Tibial artery (tissue), 4 donors: ENCODE measurements at regions of chr15 and their contacts with region 1.

Region 1: DNA sequence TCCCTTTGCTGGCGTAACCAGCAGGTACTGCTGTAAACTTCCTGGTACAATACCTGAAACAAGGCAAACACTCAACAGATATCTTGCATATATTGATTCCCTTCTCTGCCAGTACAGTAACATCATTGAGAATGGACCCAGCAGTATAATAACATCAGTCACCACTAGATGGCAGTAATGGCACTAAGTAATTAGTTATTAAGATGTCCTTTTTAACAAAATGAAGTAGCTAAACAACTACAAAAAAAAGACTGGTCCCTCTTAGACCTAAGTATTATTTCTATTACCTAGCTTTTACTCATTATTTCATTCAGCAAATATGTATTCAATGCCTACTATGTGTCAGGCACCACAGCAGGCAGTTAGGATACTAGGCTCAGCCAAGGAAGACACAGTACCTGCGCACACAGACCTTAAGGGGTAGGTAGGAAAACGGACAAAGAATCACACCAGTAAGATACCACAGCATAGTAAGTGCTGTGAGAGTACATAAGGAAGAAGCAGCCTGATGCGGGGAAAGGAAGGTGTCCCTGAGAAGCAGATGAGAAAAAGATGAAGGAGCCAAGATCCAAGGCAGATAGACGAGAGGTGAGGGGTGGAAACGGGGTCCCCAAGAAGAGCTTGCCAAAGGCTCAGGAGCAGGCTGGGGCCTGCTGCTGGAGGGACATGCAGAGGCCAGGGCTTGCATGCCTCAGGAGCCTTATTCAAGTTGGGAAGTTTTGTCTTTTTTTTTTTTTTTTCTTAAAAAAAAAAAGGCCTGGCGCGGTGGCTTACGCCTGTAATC is 102.8 kb upstream of the CHD2 start:
- DNase-seq: no peak
- H3K4me3 ChIP-seq: no peak overlapping the region
- H3K27ac ChIP-seq: peak overlapping the region; percentile 52 to 63
- H3K4me1 ChIP-seq: peaks cover 3 to 25% (median 16%) of the 10 kb centered on the region in 4 donors
- H3K27me3 ChIP-seq: no peaks in the 10 kb centered on the region
- CTCF ChIP-seq: peak; percentile 68 to 81

Region 2: DNA sequence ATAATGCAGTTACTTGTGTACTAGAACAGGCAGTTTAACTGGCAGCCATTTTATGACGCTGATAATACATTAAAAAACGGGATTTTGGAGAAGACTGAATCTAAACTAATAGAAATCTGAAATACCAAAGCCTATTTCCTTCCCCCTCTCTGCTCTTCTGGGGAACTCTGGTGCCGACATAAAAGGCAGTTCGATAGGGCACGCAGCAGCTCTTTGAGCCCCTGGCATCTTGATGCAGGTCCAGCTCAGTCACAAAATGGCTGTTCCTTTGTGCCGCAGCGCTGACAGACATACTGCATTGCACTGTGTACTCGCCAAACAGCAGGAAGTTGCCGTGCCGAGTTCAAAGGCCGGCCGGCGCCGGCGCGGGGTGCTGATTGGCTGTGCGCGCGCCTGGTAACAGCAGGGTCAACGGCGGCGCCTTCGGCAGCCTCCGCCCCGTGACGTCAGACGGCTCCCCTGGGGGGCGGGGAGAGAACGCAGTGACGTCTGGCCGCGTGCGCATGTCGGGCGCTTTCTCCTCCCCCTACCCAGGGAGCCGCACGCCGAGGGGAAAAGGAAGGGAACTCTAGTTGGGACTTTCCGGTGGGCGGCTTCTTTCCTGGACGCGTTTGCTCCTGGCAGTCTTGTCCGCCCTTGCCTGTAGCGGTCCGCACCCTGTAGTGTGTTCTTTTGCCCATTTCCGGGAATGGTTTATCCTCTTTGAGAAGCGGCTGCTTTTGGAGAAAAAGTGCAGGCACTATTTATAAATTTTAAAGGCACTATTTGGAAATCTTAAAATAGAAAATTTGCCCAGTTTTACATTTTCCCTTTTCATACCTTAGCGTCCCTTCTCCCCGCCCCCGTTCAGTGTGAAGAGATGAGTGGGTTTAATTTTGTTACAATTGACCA is 106.8 kb after region 1 on chr15:
- intact Hi-C with region 1: no loop called
- DNase-seq: peak; percentile 97 to 100
- H3K4me3 ChIP-seq: peak overlapping the region; percentile 60 to 65
- H3K27ac ChIP-seq: peak overlapping the region; percentile 92 to 95
- H3K4me1 ChIP-seq: peaks cover 0 to 68% (median 30%) of the 10 kb centered on the region in 4 donors
- H3K27me3 ChIP-seq: no peaks in the 10 kb centered on the region
- CTCF ChIP-seq: peak in 1 of 2 experiments; percentile 25

Region 3: DNA sequence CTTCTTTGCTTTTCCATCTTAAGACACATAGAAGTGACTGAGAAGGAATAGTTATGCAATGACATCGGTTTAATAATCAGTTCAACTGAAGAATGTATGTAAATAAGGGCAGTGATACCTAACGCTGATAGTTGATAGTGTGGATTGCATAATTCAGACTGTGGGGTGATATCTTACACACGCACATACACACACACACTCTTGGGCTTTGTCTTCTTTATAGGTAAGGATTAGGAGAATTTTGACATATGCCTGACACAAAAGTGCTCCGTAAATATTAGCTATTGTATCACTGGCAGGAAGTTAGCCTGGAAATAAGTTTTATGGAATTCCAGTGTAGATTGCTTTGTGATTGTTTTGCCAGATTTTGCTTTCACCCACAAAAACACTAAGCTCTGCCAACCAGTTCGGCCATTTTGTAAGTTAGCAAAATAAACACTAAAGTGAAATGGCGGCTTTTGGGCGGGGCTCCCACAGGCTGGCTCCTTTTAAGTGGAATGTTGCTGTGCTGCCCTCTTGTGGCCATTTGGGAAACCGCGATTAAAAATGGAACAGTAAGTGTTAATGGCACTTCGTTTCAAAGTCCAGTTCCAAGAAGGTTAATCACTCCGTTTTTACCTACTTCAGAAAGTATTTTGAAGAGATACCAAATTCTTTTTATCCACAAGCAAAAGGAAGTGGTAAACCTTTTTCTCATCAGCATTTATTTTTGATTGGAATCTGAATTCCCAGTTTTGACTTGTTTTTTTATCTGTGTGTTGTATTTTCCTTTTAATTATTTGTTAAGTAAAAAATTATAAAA is 120.4 kb after region 1 on chr15:
- intact Hi-C with region 1: loop called (anchors 5 kb)
- DNase-seq: peak; percentile 96 to 98
- H3K4me3 ChIP-seq: peak overlapping the region; percentile 17 to 18
- H3K27ac ChIP-seq: peak overlapping the region; percentile 92 to 95
- H3K4me1 ChIP-seq: peaks cover 6 to 98% (median 71%) of the 10 kb centered on the region in 4 donors
- H3K27me3 ChIP-seq: no peaks in the 10 kb centered on the region
- CTCF ChIP-seq: peak; percentile 88 to 97

Region 4: DNA sequence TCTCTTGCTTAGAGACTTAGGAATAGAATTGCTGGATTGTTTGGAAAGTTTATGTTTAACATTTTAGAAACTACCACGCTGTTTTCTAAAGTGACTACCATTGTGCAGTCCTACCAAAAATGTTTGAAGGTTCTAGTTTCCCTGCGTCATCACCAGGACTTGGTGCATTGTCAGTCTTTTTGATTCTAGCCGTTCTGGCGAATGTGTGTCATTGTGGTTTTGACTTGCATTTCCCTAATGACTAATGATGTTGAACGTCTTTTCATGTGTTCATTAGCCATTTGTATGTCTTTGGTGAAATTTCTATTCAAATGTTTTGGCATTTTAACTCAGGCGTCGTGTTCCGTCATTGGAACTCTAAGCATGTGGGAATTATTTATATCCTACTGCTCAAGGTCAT is 160.7 kb after region 1 on chr15:
- intact Hi-C with region 1: no loop called
- DNase-seq: no peak
- H3K4me3 ChIP-seq: no peak overlapping the region
- H3K27ac ChIP-seq: peak overlapping the region in 1 of 2 donors; percentile 28
- H3K4me1 ChIP-seq: peaks cover 0 to 28% (median 2%) of the 10 kb centered on the region in 4 donors
- H3K27me3 ChIP-seq: no peaks in the 10 kb centered on the region
- CTCF ChIP-seq: no peak

Region 5: GRCh38 chr15:92989470-92989869 is 192.1 kb after region 1 on chr15:
- intact Hi-C with region 1: loop called (anchors 10 kb)
- DNase-seq: no peak
- H3K4me3 ChIP-seq: no peak overlapping the region
- H3K27ac ChIP-seq: no peak overlapping the region
- H3K4me1 ChIP-seq: no peaks in the 10 kb centered on the region
- H3K27me3 ChIP-seq: no peaks in the 10 kb centered on the region
- CTCF ChIP-seq: no peak

Region 6: DNA sequence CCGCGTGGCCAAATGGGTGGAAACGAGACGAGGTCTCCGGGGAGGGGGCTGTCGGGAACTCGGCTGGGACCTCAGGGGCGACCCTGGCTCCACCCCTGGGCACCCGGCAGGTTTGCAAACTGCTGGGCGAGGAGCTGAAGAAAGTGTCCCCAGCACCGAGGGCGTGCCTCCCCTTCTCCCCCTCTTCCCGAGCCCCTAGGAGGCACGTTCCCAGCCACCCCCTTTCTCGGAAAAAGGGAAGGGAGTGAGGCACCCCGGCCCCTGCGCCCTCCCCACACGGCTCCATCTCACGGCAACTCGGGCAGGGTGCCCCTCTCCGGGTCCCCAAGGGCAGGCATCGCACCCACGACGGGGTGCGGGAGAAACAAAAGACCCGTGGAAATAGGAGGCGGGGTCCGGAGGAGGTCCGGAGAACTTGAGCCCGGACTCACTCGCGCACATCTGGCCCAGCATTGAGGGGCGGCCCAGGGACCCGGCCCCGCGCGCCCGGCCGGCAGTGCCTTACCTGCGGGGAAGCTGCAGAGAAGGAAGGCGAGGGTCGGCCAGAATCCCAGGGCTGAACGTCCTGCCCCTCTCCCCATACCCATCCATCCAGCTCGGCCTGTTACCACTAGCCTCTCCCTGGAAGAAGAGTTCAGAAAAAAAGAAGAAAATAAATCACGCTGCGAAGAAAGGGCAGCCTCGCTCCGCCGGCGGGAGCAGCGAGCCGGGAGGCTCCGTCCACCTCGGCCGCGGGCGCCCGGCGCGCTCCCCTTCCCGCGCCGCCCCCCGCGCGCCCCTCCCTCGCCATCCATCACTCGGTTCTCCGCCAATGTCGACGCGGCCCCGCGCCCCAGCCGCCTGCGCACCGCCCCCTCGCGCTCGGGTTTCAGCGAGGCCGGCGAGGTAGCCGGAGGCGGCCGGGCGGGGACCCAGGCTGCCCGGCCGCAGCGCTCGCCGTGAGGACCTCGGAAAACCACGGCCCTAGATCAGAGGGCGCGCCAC is 275.3 kb after region 1 on chr15:
- intact Hi-C with region 1: no loop called
- DNase-seq: peak; percentile 76 to 93
- H3K4me3 ChIP-seq: peak overlapping the region; percentile 81 to 85
- H3K27ac ChIP-seq: peak overlapping the region; percentile 79 to 83
- H3K4me1 ChIP-seq: peaks cover 0 to 44% (median 31%) of the 10 kb centered on the region in 4 donors
- H3K27me3 ChIP-seq: no peaks in the 10 kb centered on the region
- CTCF ChIP-seq: peak in 1 of 2 experiments; percentile 5